Endothelial cell of umbilical vein (primary cell): ENCODE measurements at regions of chr11 and their contacts with region 1.

Region 1: GRCh38 chr11:76152086-76152681 is 54.1 kb downstream of the WNT11 start:
- DNase-seq: peak; percentile 77
- H3K4me3 ChIP-seq: peak overlapping the region in 2 of 3 experiments; percentile 25 to 27
- H3K27ac ChIP-seq: no peak overlapping the region
- H3K4me1 ChIP-seq: no peaks in the 10 kb centered on the region
- H3K27me3 ChIP-seq: no peaks in the 10 kb centered on the region
- CTCF ChIP-seq: peak; percentile 95 to 99
- POLR2A ChIP-seq: no peak

Region 2: DNA sequence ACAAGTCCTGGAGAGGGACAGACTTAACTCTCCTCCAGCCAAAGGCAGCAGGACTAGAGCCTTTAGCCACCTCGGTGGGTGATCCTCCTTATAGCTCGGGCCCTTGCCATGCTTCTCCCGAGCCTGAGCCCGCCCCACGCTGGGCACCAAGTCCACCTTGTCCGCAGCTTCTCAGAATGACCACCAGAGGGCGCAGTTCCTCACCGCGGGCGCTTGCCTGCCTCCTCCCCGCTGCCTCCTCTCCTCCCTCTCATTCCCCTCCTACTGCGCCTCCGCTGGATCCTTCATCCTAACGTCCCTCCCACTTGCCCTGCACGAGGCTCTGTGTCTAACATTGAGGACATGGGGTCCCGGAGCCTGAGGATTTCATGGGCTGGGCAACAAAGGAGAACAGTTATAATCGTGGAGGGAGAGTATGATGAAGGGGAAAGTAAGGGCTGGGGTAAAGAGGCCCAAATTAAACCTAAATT is 445.9 kb before region 1 on chr11:
- CTCF ChIA-PET with region 1: interaction called, 20 read pairs
- POLR2A ChIA-PET with region 1: no interaction called
- dilution Hi-C with region 1: no loop called
- intact Hi-C with region 1: loop called (anchors 1 kb)
- DNase-seq: peak; percentile 72
- H3K4me3 ChIP-seq: no peak overlapping the region
- H3K27ac ChIP-seq: no peak overlapping the region
- H3K4me1 ChIP-seq: no peaks in the 10 kb centered on the region
- H3K27me3 ChIP-seq: peaks cover 0 to 3% of the 10 kb centered on the region in 2 experiments
- CTCF ChIP-seq: peak; percentile 94 to 98
- POLR2A ChIP-seq: no peak

Region 3: GRCh38 chr11:75814686-75815344 is 337.4 kb before region 1 on chr11 and contains the start of gene UVRAG:
- CTCF ChIA-PET with region 1: interaction called, 18 read pairs
- POLR2A ChIA-PET with region 1: no interaction called
- dilution Hi-C with region 1: no loop called
- intact Hi-C with region 1: no loop called
- DNase-seq: peak; percentile 100
- H3K4me3 ChIP-seq: peak within 1 kb of the TSS; percentile 90 to 95 (median 93)
- H3K27ac ChIP-seq: peak within 1 kb of the TSS; percentile 88
- H3K4me1 ChIP-seq: peaks cover 35% of the 10 kb centered on the region
- H3K27me3 ChIP-seq: no peaks in the 10 kb centered on the region
- CTCF ChIP-seq: no peak
- POLR2A ChIP-seq: peak; percentile 82
- total RNA-seq, gene UVRAG: 65.6 and 67.3 TPM in 2 replicates

Region 4: GRCh38 chr11:75896843-75897419 is 255.3 kb before region 1 on chr11:
- CTCF ChIA-PET with region 1: interaction called, 288 read pairs
- POLR2A ChIA-PET with region 1: no interaction called
- dilution Hi-C with region 1: no loop called
- intact Hi-C with region 1: loop called (anchors 1 kb)
- DNase-seq: peak; percentile 63
- H3K4me3 ChIP-seq: no peak overlapping the region
- H3K27ac ChIP-seq: no peak overlapping the region
- H3K4me1 ChIP-seq: no peaks in the 10 kb centered on the region
- H3K27me3 ChIP-seq: no peaks in the 10 kb centered on the region
- CTCF ChIP-seq: peak; percentile 31 to 35
- POLR2A ChIP-seq: no peak

Region 5: GRCh38 chr11:76008474-76008873 is 143.7 kb before region 1 on chr11:
- CTCF ChIA-PET with region 1: interaction called, 19 read pairs
- POLR2A ChIA-PET with region 1: no interaction called
- dilution Hi-C with region 1: no loop called
- intact Hi-C with region 1: no loop called
- DNase-seq: peak; percentile 34
- H3K4me3 ChIP-seq: no peak overlapping the region
- H3K27ac ChIP-seq: no peak overlapping the region
- H3K4me1 ChIP-seq: peaks cover 20% of the 10 kb centered on the region
- H3K27me3 ChIP-seq: no peaks in the 10 kb centered on the region
- CTCF ChIP-seq: no peak
- POLR2A ChIP-seq: no peak

Region 6: GRCh38 chr11:76120513-76121101 is 31.6 kb before region 1 on chr11:
- CTCF ChIA-PET with region 1: interaction called, 15 read pairs
- POLR2A ChIA-PET with region 1: no interaction called
- dilution Hi-C with region 1: no loop called
- intact Hi-C with region 1: no loop called
- DNase-seq: peak; percentile 69
- H3K4me3 ChIP-seq: peak overlapping the region in 1 of 3 experiments; percentile 23
- H3K27ac ChIP-seq: peak overlapping the region; percentile 38
- H3K4me1 ChIP-seq: peaks cover 25% of the 10 kb centered on the region
- H3K27me3 ChIP-seq: no peaks in the 10 kb centered on the region
- CTCF ChIP-seq: no peak
- POLR2A ChIP-seq: no peak

Region 7: DNA sequence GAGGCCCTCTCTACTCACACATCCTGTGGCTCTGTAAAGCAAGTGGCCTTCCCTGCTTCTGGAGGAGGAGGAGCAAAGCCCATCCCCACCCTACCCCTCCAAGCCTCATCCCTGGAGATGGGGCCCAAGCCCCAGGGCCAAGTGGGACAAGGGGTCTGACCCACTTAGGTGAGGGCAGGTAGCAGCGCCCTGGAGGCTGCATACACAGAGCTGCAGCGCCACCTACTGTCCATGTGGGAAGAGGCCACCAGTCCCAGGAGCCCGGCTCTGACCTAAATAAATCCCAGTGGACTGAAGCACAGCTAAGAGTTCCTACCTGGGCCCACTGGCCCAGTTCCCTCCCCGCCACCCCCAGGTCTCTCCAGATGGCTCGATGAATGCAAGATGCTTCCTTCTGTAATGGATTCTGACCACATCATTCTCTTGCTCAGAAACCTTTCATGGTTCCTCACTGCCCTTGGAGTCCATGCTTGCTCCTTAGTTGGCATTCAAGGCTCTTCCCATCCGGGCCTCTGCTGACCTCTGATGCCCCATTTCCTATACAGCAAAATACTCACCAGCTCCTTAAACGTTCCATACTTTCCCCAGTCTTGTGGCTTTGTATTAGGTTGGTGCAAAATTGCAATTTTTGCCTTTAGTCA is 166.7 kb after region 1 on chr11:
- CTCF ChIA-PET with region 1: interaction called, 14 read pairs
- POLR2A ChIA-PET with region 1: no interaction called
- dilution Hi-C with region 1: no loop called
- intact Hi-C with region 1: no loop called
- DNase-seq: peak; percentile 74
- H3K4me3 ChIP-seq: no peak overlapping the region
- H3K27ac ChIP-seq: no peak overlapping the region
- H3K4me1 ChIP-seq: no peaks in the 10 kb centered on the region
- H3K27me3 ChIP-seq: peaks cover 16 to 23% of the 10 kb centered on the region in 2 experiments
- CTCF ChIP-seq: peak; percentile 84 to 94
- POLR2A ChIP-seq: no peak